Heart left ventricle (tissue), 16 donors: ENCODE measurements at regions of chr18 and their contacts with region 1.

Region 1: GRCh38 chr18:33577685-33578517 is at the start of gene ASXL3:
- DNase-seq: peak; percentile 44 to 73 (median 55)
- ATAC-seq: peak; percentile 43 to 87 (median 82)
- H3K4me3 ChIP-seq: peak within 1 kb of the TSS; percentile 52 to 88 (median 73)
- H3K27ac ChIP-seq: peak within 1 kb of the TSS; percentile 78 to 94 (median 88)
- H3K4me1 ChIP-seq: peaks cover 0 to 12% (median 1%) of the 10 kb centered on the region in 12 donors
- H3K27me3 ChIP-seq: peaks cover 0 to 22% (median 0%) of the 10 kb centered on the region in 9 donors
- CTCF ChIP-seq: no peak
- POLR2A ChIP-seq: no peak
- total RNA-seq, gene ASXL3: 1.6 to 8.9 (median 3.9) TPM

Region 2: DNA sequence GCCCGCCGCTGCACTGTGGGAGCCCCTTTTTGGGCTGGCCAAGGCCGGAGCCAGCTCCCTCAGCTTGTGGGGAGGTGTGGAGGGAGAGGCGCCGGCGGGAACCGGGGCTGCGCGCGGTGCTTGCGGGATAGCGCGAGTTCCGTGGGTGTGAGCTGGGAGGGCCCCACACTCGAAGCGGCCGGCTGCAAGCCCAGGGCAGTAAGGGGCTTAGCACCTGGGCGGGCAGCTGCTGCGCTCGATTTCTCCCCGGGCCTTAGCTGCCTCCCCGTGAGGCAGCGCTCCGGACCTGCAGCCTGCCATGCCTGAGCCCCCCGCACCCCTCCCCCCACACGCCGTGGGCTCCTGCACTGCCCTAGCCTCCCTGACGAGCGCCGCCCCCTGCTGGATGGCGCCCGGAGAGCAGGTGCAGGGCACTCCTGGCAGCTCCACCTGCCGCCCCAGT is 261.7 kb before region 1 on chr18:
- intact Hi-C with region 1: no loop called
- DNase-seq: peak in 1 of 5 donors; percentile 57
- ATAC-seq: no peak
- H3K4me3 ChIP-seq: no peak overlapping the region
- H3K27ac ChIP-seq: no peak overlapping the region
- H3K4me1 ChIP-seq: no peaks in the 10 kb centered on the region
- H3K27me3 ChIP-seq: no peaks in the 10 kb centered on the region
- CTCF ChIP-seq: no peak
- POLR2A ChIP-seq: no peak

Region 3: DNA sequence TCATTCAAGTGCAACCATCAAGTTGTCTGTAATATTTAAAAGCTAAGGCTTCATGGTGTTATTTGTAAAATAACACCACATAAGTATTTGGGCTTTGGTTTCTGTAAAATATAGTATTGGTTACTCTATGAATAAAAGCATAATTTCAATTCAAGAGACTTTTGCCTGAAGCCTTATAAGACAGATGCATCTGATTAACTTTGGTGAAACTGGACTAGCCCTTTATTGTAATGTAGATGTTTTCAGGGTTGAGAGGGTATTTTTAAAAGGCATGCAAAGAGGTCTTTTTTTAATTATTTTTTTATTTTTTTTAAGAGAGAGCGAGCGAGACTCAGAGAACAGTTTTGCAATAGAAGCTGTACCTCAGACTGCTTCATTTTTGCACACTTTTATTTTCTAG is 66.6 kb after region 1 on chr18:
- intact Hi-C with region 1: loop called in 1 of 10 experiments (anchors 10 kb)
- DNase-seq: no peak
- ATAC-seq: no peak
- H3K4me3 ChIP-seq: no peak overlapping the region
- H3K27ac ChIP-seq: no peak overlapping the region
- H3K4me1 ChIP-seq: no peaks in the 10 kb centered on the region
- H3K27me3 ChIP-seq: no peaks in the 10 kb centered on the region
- CTCF ChIP-seq: no peak
- POLR2A ChIP-seq: no peak

Region 4: DNA sequence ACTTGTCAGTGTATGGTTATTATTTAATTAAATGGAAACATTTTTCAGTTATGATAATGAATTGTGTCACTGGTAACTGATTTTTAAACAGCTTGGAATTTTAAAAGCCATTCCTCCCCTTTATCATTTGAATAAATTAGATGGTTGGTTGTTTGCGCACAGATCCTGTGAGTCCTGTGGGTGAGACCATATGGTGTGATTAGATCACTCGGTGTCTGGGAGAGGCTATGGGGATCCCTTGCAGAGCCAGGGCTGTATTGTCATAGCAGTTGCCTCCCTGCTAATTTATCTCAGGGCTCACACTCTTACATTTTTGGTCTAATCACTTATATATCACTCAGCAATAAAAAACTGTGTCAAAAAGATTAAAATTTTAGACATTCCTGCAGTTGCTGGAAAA is 133.6 kb after region 1 on chr18:
- intact Hi-C with region 1: loop called in 1 of 10 experiments (anchors 10 kb)
- DNase-seq: no peak
- ATAC-seq: no peak
- H3K4me3 ChIP-seq: no peak overlapping the region
- H3K27ac ChIP-seq: no peak overlapping the region
- H3K4me1 ChIP-seq: peaks cover 0 to 6% (median 0%) of the 10 kb centered on the region in 12 donors
- H3K27me3 ChIP-seq: no peaks in the 10 kb centered on the region
- CTCF ChIP-seq: no peak
- POLR2A ChIP-seq: no peak